ENCODE measurements at regions of chr10 and their contacts with region 1.

Region 1: DNA sequence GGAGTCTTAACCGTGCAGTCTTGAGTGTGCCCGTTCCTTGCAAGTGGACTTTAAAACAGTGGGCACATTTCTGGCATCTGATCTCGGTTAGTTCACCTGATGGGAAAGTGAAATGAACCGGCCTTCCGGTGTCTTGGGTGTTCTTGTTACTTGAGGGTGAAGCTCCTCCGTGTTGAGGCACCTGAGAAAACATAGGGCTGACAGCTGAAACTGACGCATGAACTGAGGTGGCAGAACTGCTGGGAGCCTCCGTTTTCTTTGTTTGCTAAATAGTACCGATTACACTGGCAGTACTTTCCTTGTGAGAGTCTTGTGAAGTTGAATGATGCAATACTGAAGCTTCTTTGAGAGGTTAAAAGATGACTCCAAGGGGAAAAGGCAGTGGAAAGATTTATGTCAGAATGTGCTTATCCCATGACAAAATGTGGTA is 62.8 kb upstream of the SAMD8 start:
- DNase-seq: no peak
- H3K4me3 ChIP-seq: no peak overlapping the region
- H3K27ac ChIP-seq: no peak overlapping the region
- H3K4me1 ChIP-seq: no peaks in the 10 kb centered on the region
- H3K27me3 ChIP-seq: no peaks in the 10 kb centered on the region
- CTCF ChIP-seq: no peak
- POLR2A ChIP-seq: no peak

Region 2: GRCh38 chr10:74548676-74549075 is 500.0 kb before region 1 on chr10:
- intact Hi-C with region 1: no loop called
- DNase-seq: no peak
- H3K4me3 ChIP-seq: no peak overlapping the region
- H3K27ac ChIP-seq: no peak overlapping the region
- H3K4me1 ChIP-seq: no peaks in the 10 kb centered on the region
- H3K27me3 ChIP-seq: no peaks in the 10 kb centered on the region
- CTCF ChIP-seq: no peak
- POLR2A ChIP-seq: no peak

Region 3: DNA sequence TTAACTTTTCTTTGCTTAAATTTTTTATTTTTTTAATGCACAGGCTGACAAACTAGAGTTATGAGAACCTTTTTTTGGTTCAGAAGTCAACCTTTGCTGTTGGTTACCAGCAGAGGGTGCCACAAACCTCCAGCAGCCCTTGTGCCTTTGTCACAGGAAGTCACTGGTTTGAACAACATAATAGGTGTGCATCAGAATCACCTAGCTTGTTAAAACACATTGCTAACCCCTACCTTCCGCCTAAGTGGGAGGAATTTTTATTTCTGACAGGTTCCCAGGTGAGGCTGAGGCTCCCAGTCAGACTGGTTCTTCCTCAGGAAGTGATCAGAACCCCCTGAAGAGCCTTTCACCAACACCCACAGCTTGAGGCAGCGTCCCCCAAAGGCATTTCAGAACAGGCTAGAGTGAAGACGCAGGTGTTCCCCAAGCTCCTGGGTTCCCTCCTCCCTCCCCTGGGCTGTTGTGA is 139.3 kb after region 1 on chr10:
- intact Hi-C with region 1: loop called (anchors 5 kb)
- DNase-seq: peak in 1 of 2 donors; percentile 54
- H3K4me3 ChIP-seq: no peak overlapping the region
- H3K27ac ChIP-seq: peak overlapping the region in 1 of 2 donors; percentile 27
- H3K4me1 ChIP-seq: no peaks in the 10 kb centered on the region
- H3K27me3 ChIP-seq: no peaks in the 10 kb centered on the region
- CTCF ChIP-seq: peak in 2 of 3 donors; percentile 61 to 66
- POLR2A ChIP-seq: no peak

Measured in breast epithelium (tissue), 4 donors.